ENCODE measurements at regions of chr7 and their contacts with region 1.

Region 1: DNA sequence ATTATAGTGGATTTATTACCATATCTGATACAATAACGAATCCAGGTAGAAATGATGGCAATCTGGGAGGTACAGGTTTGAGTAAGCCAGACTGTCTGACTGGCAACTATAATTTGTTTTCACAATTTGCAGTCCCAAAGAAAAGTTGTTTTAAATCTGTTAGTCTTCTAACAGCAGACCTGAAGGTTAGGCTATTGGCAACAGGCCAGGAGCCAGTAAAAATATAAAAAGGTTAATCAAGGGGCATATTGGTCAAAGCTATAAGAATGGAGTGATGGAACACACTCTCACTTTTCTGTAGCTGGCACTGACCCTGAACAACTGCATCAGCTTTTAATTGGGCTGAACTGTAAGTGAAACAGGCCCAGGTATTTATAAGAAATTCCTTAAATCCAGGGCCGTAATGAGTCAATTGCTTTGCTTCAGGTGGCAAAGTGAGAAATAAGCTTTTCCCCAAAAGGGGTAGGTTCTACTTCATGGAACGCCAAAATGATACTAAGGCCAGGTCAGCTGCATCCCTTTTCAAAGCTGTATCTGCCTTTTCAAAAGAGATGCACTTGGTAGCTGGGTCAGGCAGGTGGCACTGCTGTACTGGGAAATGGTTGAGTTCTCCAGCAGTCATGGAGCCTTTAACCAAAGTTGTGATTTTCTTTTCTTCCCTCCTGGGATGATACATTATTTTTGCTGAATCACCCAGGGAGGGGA is 7.0 kb upstream of the GPR22 start:
- DNase-seq: peak; percentile 56
- ATAC-seq: peak; percentile 82
- H3K4me3 Mint-ChIP-seq: no peak overlapping the region
- H3K27ac Mint-ChIP-seq: no peak overlapping the region
- H3K4me1 Mint-ChIP-seq: no peaks in the 10 kb centered on the region
- H3K27me3 Mint-ChIP-seq: no peaks in the 10 kb centered on the region
- CTCF ChIP-seq: peak; percentile 44

Region 2: GRCh38 chr7:106999023-106999422 is 463.9 kb before region 1 on chr7:
- CTCF ChIA-PET with region 1: no interaction called
- POLR2A ChIA-PET with region 1: no interaction called
- intact Hi-C with region 1: no loop called
- DNase-seq: no peak
- ATAC-seq: no peak
- H3K4me3 Mint-ChIP-seq: no peak overlapping the region
- H3K27ac Mint-ChIP-seq: no peak overlapping the region
- H3K4me1 Mint-ChIP-seq: no peaks in the 10 kb centered on the region
- H3K27me3 Mint-ChIP-seq: peaks cover 8% of the 10 kb centered on the region
- CTCF ChIP-seq: no peak

Region 3: GRCh38 chr7:107446531-107446930 is 16.4 kb before region 1 on chr7:
- CTCF ChIA-PET with region 1: no interaction called
- POLR2A ChIA-PET with region 1: no interaction called
- intact Hi-C with region 1: no loop called
- DNase-seq: peak; percentile 22
- ATAC-seq: peak; percentile 79
- H3K4me3 Mint-ChIP-seq: no peak overlapping the region
- H3K27ac Mint-ChIP-seq: no peak overlapping the region
- H3K4me1 Mint-ChIP-seq: peaks cover 12% of the 10 kb centered on the region
- H3K27me3 Mint-ChIP-seq: no peaks in the 10 kb centered on the region
- CTCF ChIP-seq: no peak

Region 4: DNA sequence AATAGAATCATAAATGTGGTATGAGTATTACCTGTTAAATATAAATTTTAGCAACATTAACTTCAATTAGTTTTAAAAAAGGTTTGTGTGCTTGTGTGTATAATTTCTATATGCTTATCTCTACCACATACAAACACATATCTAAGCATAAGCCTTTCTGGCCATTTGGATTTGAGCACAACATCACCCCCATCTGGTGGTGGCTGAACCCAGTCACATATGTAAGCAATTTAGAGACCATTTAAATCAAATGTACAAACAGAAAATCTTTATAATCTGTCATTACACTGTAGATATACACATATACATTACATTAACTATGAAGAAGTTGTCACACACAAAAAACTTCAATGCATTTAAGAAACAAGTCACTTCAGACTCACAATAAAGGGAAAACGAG is 38.7 kb after region 1 on chr7:
- CTCF ChIA-PET with region 1: interaction called, 10 read pairs
- POLR2A ChIA-PET with region 1: no interaction called
- intact Hi-C with region 1: no loop called
- DNase-seq: peak; percentile 63
- ATAC-seq: peak; percentile 51
- H3K4me3 Mint-ChIP-seq: no peak overlapping the region
- H3K27ac Mint-ChIP-seq: no peak overlapping the region
- H3K4me1 Mint-ChIP-seq: peaks cover 12% of the 10 kb centered on the region
- H3K27me3 Mint-ChIP-seq: no peaks in the 10 kb centered on the region
- CTCF ChIP-seq: peak; percentile 8